GM13977 (cell line): ENCODE measurements at regions of chr15 and their contacts with region 1.

Region 1: GRCh38 chr15:88467073-88467934 is at the starts of genes MRPL46 and MRPS11:
- DNase-seq: peak; percentile 84
- CTCF ChIP-seq: no peak

Region 2: GRCh38 chr15:88620995-88621772 is 153.9 kb after region 1 on chr15 and contains the start of gene AEN:
- in situ Hi-C with region 1: loop called (anchors 10 kb)
- DNase-seq: peak; percentile 97
- CTCF ChIP-seq: no peak